GM12878 (cell line): ENCODE measurements at regions of chr19 and their contacts with region 1.

Region 1: GRCh38 chr19:48999481-49000325 is 6.0 kb downstream of the RUVBL2 start:
- DNase-seq: no peak
- ATAC-seq: peak; percentile 84
- H3K4me3 ChIP-seq: no peak overlapping the region
- H3K27ac ChIP-seq: no peak overlapping the region
- H3K4me1 ChIP-seq: no peaks in the 10 kb centered on the region
- H3K27me3 ChIP-seq: no peaks in the 10 kb centered on the region
- CTCF ChIP-seq: peak; percentile 43 to 81 (median 65)
- EP300 ChIP-seq: no peak
- POLR2A ChIP-seq: no peak
- RAD21 ChIP-seq: peak; percentile 38

Region 2: GRCh38 chr19:48899781-48900476 is 99.8 kb before region 1 on chr19 and contains the start of gene NUCB1:
- CTCF ChIA-PET with region 1: no interaction called
- POLR2A ChIA-PET with region 1: no interaction called
- RAD21 ChIA-PET with region 1: no interaction called
- SMC1A ChIA-PET with region 1: no interaction called
- in situ Hi-C with region 1: no loop called
- intact Hi-C with region 1: no loop called
- DNase-seq: peak; percentile 89
- ATAC-seq: peak; percentile 95
- H3K4me3 ChIP-seq: peak within 1 kb of the TSS; percentile 99
- H3K27ac ChIP-seq: peak within 1 kb of the TSS; percentile 47
- H3K4me1 ChIP-seq: no peaks in the 10 kb centered on the region; the same call in 1 of the 2 replicates
- H3K27me3 ChIP-seq: no peaks in the 10 kb centered on the region
- CTCF ChIP-seq: 0 out of 6 replicates have a peak, but pooled peaks of 1 of the 3 experiments have one; percentile 13
- EP300 ChIP-seq: no peak
- POLR2A ChIP-seq: peak; percentile 69
- RAD21 ChIP-seq: no peak
- polyA plus RNA-seq, gene NUCB1: 1.8 to 3.2 TPM

Region 3: DNA sequence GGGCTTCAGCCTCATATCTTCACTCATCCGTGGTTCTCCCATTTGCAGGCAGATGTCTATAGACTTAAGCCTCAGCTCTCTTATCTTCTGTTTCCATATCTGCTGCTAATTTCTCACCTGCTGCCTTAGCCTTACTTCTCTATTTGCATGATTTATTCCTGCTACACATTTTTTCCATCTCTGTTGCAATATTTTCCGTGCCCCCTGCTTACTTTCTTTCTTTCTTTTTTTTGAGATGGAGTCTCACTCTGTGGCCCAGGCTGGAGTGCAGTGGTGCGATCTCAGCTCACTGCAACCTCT is 12.3 kb before region 1 on chr19:
- CTCF ChIA-PET with region 1: interaction called, 11 read pairs
- POLR2A ChIA-PET with region 1: interaction called, 41 read pairs
- RAD21 ChIA-PET with region 1: no interaction called
- SMC1A ChIA-PET with region 1: no interaction called
- in situ Hi-C with region 1: no loop called
- intact Hi-C with region 1: no loop called
- DNase-seq: no peak
- ATAC-seq: no peak
- H3K4me3 ChIP-seq: no peak overlapping the region
- H3K27ac ChIP-seq: no peak overlapping the region
- H3K4me1 ChIP-seq: peaks cover 3% of the 10 kb centered on the region
- H3K27me3 ChIP-seq: no peaks in the 10 kb centered on the region
- CTCF ChIP-seq: no peak
- EP300 ChIP-seq: no peak
- POLR2A ChIP-seq: no peak
- RAD21 ChIP-seq: no peak

Region 4: GRCh38 chr19:49009828-49010227 is 10.1 kb after region 1 on chr19:
- CTCF ChIA-PET with region 1: interaction called, 16 read pairs
- POLR2A ChIA-PET with region 1: no interaction called
- RAD21 ChIA-PET with region 1: no interaction called
- SMC1A ChIA-PET with region 1: no interaction called
- in situ Hi-C with region 1: no loop called
- intact Hi-C with region 1: no loop called
- DNase-seq: no peak
- ATAC-seq: no peak
- H3K4me3 ChIP-seq: no peak overlapping the region
- H3K27ac ChIP-seq: no peak overlapping the region
- H3K4me1 ChIP-seq: no peaks in the 10 kb centered on the region
- H3K27me3 ChIP-seq: no peaks in the 10 kb centered on the region
- CTCF ChIP-seq: no peak
- EP300 ChIP-seq: no peak
- POLR2A ChIP-seq: no peak
- RAD21 ChIP-seq: no peak

Region 5: GRCh38 chr19:49017666-49018351 is 18.1 kb after region 1 on chr19:
- CTCF ChIA-PET with region 1: interaction called, 14 read pairs
- POLR2A ChIA-PET with region 1: no interaction called
- RAD21 ChIA-PET with region 1: no interaction called
- SMC1A ChIA-PET with region 1: no interaction called
- in situ Hi-C with region 1: no loop called
- intact Hi-C with region 1: no loop called
- DNase-seq: no peak
- ATAC-seq: peak; percentile 91
- H3K4me3 ChIP-seq: peak overlapping the region; percentile 58; the same call in 1 of the 2 replicates
- H3K27ac ChIP-seq: no peak overlapping the region
- H3K4me1 ChIP-seq: peaks cover 15% of the 10 kb centered on the region
- H3K27me3 ChIP-seq: no peaks in the 10 kb centered on the region
- CTCF ChIP-seq: peak; percentile 55 to 76 (median 56)
- EP300 ChIP-seq: no peak
- POLR2A ChIP-seq: no peak
- RAD21 ChIP-seq: 0 out of 2 replicates have a peak, but pooled peaks have one; percentile 14